ENCODE measurements at regions of chr4 and their contacts with region 1.

Region 1: DNA sequence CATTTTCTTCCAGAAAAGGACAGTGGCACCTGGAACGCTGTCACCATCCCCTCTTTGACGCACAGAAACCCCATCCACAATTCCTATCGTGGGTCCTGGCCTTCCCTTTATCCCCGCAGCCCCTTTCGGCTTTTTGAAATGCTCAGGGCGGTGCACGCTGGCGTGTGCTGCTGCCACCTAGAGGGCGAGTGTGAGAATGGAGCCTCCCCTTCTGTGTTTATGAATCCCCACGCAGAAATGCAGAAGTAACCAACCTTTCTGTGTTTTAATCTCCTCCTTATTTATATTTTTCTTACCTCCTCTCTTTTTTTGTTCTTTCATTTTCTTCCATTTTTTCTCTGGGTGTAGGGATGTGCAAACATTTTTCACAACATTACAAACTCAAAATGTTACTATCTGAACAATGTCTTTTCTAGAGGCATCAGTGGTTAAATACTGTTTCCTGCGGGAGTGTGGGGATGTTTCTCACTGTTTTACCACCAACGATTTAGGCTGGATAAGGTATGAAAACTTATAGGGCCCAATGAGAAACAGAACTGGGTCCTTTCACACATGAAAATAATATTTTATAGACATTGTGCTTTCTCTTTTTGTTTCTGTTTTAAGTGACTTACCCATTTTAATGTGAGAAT is 50.0 kb downstream of the TMA16 start:
- DNase-seq: no peak
- H3K4me3 ChIP-seq: peak overlapping the region; percentile 44
- H3K27ac ChIP-seq: no peak overlapping the region
- H3K27me3 ChIP-seq: no peaks in the 10 kb centered on the region
- CTCF ChIP-seq: peak; percentile 98

Region 2: DNA sequence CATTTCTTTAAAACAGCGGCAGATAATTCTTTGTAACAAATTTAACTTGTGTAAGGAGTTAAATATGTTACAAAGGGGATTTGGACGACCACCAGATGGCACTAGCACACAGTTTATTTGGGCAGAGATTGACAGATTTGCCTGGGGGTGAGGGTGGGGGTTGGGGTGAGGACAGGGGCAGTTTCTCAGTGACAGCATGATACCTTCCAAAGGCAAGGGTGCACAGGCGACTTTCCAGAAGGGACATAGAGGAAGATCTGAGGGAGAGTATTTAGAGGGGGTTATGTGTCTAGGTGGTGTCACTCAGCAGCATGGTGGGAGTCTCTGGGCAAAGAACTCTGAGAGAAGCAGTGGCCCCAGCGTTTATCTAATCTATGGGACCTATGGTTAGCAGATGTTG is 59.6 kb before region 1 on chr4:
- CTCF ChIA-PET with region 1: interaction called, 218 read pairs
- POLR2A ChIA-PET with region 1: no interaction called
- DNase-seq: peak; percentile 11
- H3K4me3 ChIP-seq: no peak overlapping the region
- H3K27ac ChIP-seq: no peak overlapping the region
- H3K27me3 ChIP-seq: peaks cover 3% of the 10 kb centered on the region
- CTCF ChIP-seq: peak; percentile 63

Region 3: GRCh38 chr4:163534056-163534455 is 10.5 kb before region 1 on chr4:
- CTCF ChIA-PET with region 1: interaction called, 66 read pairs
- POLR2A ChIA-PET with region 1: no interaction called
- DNase-seq: no peak
- H3K4me3 ChIP-seq: no peak overlapping the region
- H3K27ac ChIP-seq: no peak overlapping the region
- H3K27me3 ChIP-seq: no peaks in the 10 kb centered on the region
- CTCF ChIP-seq: no peak

Region 4: GRCh38 chr4:163701916-163702315 is 157.4 kb after region 1 on chr4:
- CTCF ChIA-PET with region 1: interaction called, 10 read pairs
- POLR2A ChIA-PET with region 1: no interaction called
- DNase-seq: peak; percentile 80
- H3K4me3 ChIP-seq: no peak overlapping the region
- H3K27ac ChIP-seq: no peak overlapping the region
- H3K27me3 ChIP-seq: no peaks in the 10 kb centered on the region
- CTCF ChIP-seq: 0 out of 2 replicates have a peak, but pooled peaks have one; percentile 17

Region 5: DNA sequence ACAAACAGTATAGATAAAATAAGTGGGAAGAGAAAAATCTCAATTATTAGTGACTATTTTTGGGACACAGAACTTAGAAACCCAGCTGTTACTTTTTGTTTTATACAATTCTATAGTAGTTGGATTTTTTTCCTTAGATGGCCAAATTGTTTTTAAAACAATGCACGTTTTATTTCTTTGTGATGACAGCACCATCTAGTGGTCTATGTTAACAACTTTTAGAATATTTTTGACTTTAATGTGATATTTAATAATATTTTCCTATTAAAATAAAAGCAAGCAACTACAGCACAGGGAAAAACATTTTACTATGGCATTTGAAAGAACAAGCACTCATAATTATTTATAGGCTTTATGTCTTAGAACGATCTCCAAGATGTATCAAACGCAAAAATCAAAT is 1203.9 kb after region 1 on chr4:
- CTCF ChIA-PET with region 1: interaction called, 13 read pairs
- POLR2A ChIA-PET with region 1: no interaction called
- DNase-seq: no peak
- H3K4me3 ChIP-seq: no peak overlapping the region
- H3K27ac ChIP-seq: no peak overlapping the region
- H3K27me3 ChIP-seq: no peaks in the 10 kb centered on the region
- CTCF ChIP-seq: peak; percentile 40

Measured in AG04450 (cell line).